Activated T-helper 2 cell treated with anti-CD3 and anti-CD28 coated beads, Interferon-gamma antibody, Interleukin-2, Interleukin-4, amounts not matched to agents 10 μg/mL and 5 μg/mL and 100 μg/mL, durations not matched to agents 14 hours and 24 hours and 36 hours (primary cell): ENCODE measurements at regions of chrX and their contacts with region 1.

Region 1: GRCh38 chrX:56729152-56729850 is at the start of gene NBDY:
- DNase-seq: peak; percentile 11
- H3K4me3 Mint-ChIP-seq: peak within 1 kb of the TSS; percentile 91
- H3K27ac Mint-ChIP-seq: peak within 1 kb of the TSS; percentile 83
- H3K4me1 Mint-ChIP-seq: peaks cover 19% of the 10 kb centered on the region
- H3K27me3 Mint-ChIP-seq: no peaks in the 10 kb centered on the region
- total RNA-seq, gene NBDY: 33.9 and 36.5 TPM in 2 replicates

Region 2: DNA sequence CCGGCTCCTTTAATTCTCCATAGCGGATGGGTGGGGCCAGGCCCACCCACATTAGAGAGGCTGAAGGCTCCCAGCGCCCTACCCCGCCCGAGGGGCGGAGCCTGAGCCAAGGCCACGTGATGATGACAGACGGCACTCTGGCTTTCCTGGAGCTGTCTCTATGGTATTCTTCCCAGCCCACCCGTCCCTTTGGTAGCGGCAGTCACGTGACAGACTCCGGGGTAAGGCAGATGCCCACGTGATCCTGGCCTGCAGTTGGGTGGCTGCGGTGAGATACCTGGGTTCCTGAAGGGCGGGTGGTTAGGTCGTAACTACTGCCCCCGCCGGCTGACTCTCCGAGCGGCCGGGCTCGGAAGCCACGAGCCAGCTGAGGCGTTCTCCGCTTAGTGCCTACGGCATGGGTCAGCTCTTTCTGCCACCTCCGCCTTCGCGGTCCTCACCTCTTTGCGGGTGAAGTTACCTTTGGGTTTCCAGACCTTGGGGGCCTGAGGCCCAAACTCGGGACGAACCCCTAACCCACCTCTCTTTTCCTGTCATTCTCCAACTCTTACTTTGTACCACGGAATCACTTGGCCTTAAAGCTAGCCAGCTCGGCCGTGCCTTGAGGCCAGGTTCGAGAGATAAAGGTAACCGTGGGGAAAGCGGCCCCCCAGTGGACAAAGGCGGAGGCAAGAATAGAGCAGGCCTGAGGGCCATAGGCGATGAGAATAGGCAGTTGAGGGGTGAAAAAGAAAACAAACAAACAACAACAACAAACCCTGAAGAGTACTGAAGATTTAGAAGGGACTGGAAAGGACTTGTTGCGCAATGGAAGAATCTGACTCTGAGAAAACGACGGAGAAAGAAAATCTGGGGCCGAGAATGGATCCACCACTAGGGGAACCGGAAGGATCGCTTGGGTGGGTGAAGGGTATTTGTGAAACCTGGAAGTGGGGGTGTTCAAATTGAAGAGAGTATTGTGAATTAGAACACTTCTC is 1011.5 kb before region 1 on chrX and contains the start of gene RRAGB:
- intact Hi-C with region 1: loop called (anchors 5 kb)
- DNase-seq: peak; percentile 88
- H3K4me3 Mint-ChIP-seq: peak within 1 kb of the TSS; percentile 87
- H3K27ac Mint-ChIP-seq: peak within 1 kb of the TSS; percentile 83
- H3K4me1 Mint-ChIP-seq: peaks cover 17% of the 10 kb centered on the region
- H3K27me3 Mint-ChIP-seq: no peaks in the 10 kb centered on the region
- total RNA-seq, gene RRAGB: 5.2 and 6.4 TPM in 2 replicates

Region 3: GRCh38 chrX:56268888-56269287 is 460.4 kb before region 1 on chrX:
- intact Hi-C with region 1: loop called (anchors 5 kb)
- DNase-seq: no peak
- H3K4me3 Mint-ChIP-seq: no peak overlapping the region
- H3K27ac Mint-ChIP-seq: no peak overlapping the region
- H3K4me1 Mint-ChIP-seq: peaks cover 9% of the 10 kb centered on the region
- H3K27me3 Mint-ChIP-seq: no peaks in the 10 kb centered on the region

Region 4: DNA sequence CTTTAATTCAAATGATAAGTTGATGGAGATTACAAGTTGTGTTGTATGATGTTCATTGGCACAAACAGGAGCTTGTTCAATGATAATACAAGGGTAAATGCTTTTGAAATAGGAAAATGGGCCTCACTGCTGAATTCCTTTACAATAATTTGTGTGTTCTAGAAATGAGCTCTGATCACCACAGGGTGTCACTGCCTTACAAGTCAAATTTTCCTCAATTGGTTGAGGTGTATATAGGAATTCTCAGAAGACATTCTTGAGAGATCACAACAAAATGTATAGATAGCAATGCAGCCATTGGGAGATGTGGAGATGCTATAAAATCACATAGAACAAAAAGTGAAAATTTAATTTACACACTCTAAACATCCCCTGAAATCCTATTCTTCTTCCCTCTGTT is 447.5 kb before region 1 on chrX:
- intact Hi-C with region 1: loop called (anchors 1 kb)
- DNase-seq: no peak
- H3K4me3 Mint-ChIP-seq: no peak overlapping the region
- H3K27ac Mint-ChIP-seq: no peak overlapping the region
- H3K4me1 Mint-ChIP-seq: peaks cover 8% of the 10 kb centered on the region
- H3K27me3 Mint-ChIP-seq: no peaks in the 10 kb centered on the region

Region 5: GRCh38 chrX:56382278-56382677 is 347.0 kb before region 1 on chrX:
- intact Hi-C with region 1: loop called (anchors 5 kb)
- DNase-seq: no peak
- H3K4me3 Mint-ChIP-seq: no peak overlapping the region
- H3K27ac Mint-ChIP-seq: peak overlapping the region; percentile 85
- H3K4me1 Mint-ChIP-seq: peaks cover 32% of the 10 kb centered on the region
- H3K27me3 Mint-ChIP-seq: no peaks in the 10 kb centered on the region